Ovary (tissue), 10 donors: ENCODE measurements at regions of chr16 and their contacts with region 1.

Region 1: DNA sequence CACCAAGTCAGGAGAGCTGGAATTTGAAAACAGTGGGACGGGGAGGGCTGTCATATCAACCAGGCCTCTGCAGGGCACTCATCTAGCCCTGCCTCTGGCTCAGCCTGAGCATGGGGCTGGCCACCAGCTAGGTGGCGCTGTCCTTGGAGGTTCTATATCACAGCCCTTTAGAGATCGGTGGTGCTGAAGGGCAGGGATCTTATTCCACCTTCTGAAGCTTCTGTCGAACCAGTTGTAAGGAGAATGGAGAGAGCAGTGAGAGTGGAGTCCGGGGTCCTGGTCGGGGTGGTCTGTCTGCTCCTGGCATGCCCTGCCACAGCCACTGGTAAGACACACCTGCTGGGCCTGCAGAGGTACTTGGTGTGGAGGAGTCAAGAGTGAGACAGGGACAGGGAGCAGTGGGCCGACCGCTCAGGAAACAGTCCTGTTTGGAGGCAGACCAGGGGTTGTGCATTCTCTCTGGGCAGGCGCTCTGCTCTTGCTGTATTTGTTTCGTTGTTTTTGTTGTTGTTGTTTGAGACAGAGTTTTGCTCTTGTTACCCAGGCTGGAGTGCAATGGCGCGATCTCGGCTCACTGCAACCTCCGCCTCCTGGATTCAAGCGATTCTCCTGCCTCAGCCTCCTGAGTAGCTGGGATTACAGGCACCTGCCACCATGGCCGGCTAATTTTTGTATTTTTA is at the start of gene CES3:
- DNase-seq: peak in 1 of 5 donors; percentile 63
- H3K4me3 ChIP-seq: no peak within 1 kb of the TSS
- H3K27ac ChIP-seq: no peak within 1 kb of the TSS
- H3K4me1 ChIP-seq: no peaks in the 10 kb centered on the region
- H3K27me3 ChIP-seq: no peaks in the 10 kb centered on the region
- CTCF ChIP-seq: no peak
- EP300 ChIP-seq: no peak
- POLR2A ChIP-seq: no peak
- total RNA-seq, gene CES3: 0.45 to 2.3 (median 1.4) TPM

Region 2: GRCh38 chr16:66250686-66251431 is 710.3 kb before region 1 on chr16:
- intact Hi-C with region 1: no loop called
- DNase-seq: peak; percentile 73 to 86 (median 77)
- H3K4me3 ChIP-seq: no peak overlapping the region
- H3K27ac ChIP-seq: peak overlapping the region in 1 of 2 donors; percentile 61
- H3K4me1 ChIP-seq: peaks cover 3% of the 10 kb centered on the region
- H3K27me3 ChIP-seq: no peaks in the 10 kb centered on the region
- CTCF ChIP-seq: no peak
- EP300 ChIP-seq: no peak
- POLR2A ChIP-seq: no peak

Region 3: GRCh38 chr16:66705790-66706505 is 255.3 kb before region 1 on chr16:
- intact Hi-C with region 1: no loop called
- DNase-seq: no peak
- H3K4me3 ChIP-seq: no peak overlapping the region
- H3K27ac ChIP-seq: no peak overlapping the region
- H3K4me1 ChIP-seq: no peaks in the 10 kb centered on the region
- H3K27me3 ChIP-seq: no peaks in the 10 kb centered on the region
- CTCF ChIP-seq: no peak
- EP300 ChIP-seq: no peak
- POLR2A ChIP-seq: no peak

Region 4: GRCh38 chr16:67393035-67393787 is 432.0 kb after region 1 on chr16 and contains the start of gene TPPP3:
- intact Hi-C with region 1: loop called in 1 of 4 experiments (anchors 10 kb)
- DNase-seq: peak; percentile 85 to 94 (median 93)
- H3K4me3 ChIP-seq: peak within 1 kb of the TSS; percentile 32
- H3K27ac ChIP-seq: no peak within 1 kb of the TSS
- H3K4me1 ChIP-seq: peaks cover 10% of the 10 kb centered on the region
- H3K27me3 ChIP-seq: no peaks in the 10 kb centered on the region
- CTCF ChIP-seq: peak; percentile 58 to 79 (median 62)
- EP300 ChIP-seq: no peak
- POLR2A ChIP-seq: peak; percentile 33
- total RNA-seq, gene TPPP3: 2.2 to 269 (median 10.9) TPM